ENCODE measurements at regions of chr3 and their contacts with region 1.

Region 1: GRCh38 chr3:172102123-172102882 is 62.9 kb downstream of the FNDC3B start:
- DNase-seq: no peak
- ATAC-seq: peak in 1 of 4 donors; percentile 30
- H3K4me3 ChIP-seq: peak overlapping the region in 1 of 12 donors; percentile 6
- H3K27ac ChIP-seq: peak overlapping the region in 1 of 12 donors; percentile 45
- H3K4me1 ChIP-seq: peaks cover 9 to 100% (median 87%) of the 10 kb centered on the region in 12 donors
- H3K27me3 ChIP-seq: no peaks in the 10 kb centered on the region
- CTCF ChIP-seq: no peak
- POLR2A ChIP-seq: no peak

Region 2: DNA sequence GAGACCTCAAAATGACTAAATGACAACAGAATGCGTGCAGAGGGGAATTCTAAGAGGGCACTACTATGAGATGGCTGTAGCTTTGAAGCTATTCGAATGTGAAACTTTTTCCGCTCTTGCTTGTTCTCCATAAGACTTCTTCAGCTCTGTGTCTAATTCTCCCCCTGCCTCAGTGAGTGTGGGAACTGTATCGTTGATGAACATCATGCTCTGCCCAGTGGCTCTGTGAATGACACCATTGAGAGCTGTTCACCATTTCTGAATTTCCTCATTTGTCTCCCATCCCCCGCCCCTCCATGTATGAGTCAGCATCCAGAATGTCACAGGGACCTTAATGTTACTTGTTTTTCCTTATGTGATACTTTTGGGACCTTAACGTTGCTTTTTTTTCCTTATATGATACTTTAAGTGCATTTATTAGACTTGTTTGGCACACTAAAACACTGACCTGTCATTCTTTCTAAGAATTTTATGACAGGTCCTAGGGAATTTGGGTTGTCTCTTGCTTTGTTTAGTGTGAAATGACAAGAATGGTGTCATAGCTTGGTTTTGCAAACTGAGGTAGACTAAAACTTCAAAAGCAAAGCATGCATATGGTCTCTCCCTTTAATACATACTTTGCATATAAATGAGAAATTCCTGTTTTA is 36.6 kb after region 1 on chr3:
- intact Hi-C with region 1: loop called in 1 of 10 experiments (anchors 5 kb)
- DNase-seq: peak in 4 of 5 donors; percentile 56 to 63 (median 56)
- ATAC-seq: peak; percentile 28 to 75 (median 58)
- H3K4me3 ChIP-seq: no peak overlapping the region
- H3K27ac ChIP-seq: peak overlapping the region in 11 of 12 donors; percentile 16 to 92 (median 68)
- H3K4me1 ChIP-seq: peaks cover 27 to 100% (median 77%) of the 10 kb centered on the region in 12 donors
- H3K27me3 ChIP-seq: no peaks in the 10 kb centered on the region
- CTCF ChIP-seq: no peak
- POLR2A ChIP-seq: no peak

Region 3: GRCh38 chr3:172208586-172209332 is 106.5 kb after region 1 on chr3:
- intact Hi-C with region 1: no loop called
- DNase-seq: peak in 2 of 5 donors; percentile 28 to 59
- ATAC-seq: peak in 3 of 4 donors; percentile 1 to 23 (median 10)
- H3K4me3 ChIP-seq: no peak overlapping the region
- H3K27ac ChIP-seq: peak overlapping the region in 8 of 12 donors; percentile 41 to 73 (median 58)
- H3K4me1 ChIP-seq: peaks cover 10 to 71% (median 53%) of the 10 kb centered on the region in 12 donors
- H3K27me3 ChIP-seq: no peaks in the 10 kb centered on the region
- CTCF ChIP-seq: no peak
- POLR2A ChIP-seq: no peak

Region 4: DNA sequence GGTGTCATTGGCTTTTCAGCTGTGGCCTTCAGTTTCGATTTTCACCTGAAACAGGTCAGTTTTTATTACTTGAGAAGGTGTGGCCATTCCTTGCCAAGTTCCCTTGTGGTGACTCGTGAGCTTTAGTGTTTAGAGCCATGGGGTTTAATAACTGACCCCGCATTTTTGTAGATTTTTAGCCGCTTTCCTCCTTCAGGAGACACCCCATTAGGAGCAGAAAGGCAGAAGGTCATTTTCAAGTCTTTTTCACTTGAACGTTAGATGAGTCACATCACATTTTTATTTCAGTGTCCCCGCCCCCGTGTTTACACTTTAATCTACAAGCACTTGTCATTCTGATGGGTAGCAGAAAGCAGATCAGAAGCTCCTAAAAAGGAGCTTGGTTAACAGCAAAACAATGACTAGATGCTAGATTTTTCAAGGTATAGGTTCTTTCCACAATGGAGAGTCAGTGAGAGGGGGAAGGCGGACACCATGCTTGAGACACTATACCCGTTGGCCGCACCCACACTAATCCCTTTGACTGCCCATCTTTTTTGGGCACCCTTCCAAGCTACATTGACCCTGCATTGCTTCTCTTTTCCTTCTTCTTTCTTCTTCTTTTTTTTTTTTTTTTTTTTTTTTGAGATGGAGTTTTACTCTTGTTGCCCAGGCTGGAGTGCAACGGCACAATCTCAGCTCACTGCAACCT is 213.2 kb after region 1 on chr3:
- intact Hi-C with region 1: no loop called
- DNase-seq: peak in 3 of 5 donors; percentile 36 to 51 (median 39)
- ATAC-seq: peak; percentile 25 to 44 (median 30)
- H3K4me3 ChIP-seq: no peak overlapping the region
- H3K27ac ChIP-seq: peak overlapping the region; percentile 31 to 91 (median 83)
- H3K4me1 ChIP-seq: peaks cover 20 to 90% (median 80%) of the 10 kb centered on the region in 12 donors
- H3K27me3 ChIP-seq: no peaks in the 10 kb centered on the region
- CTCF ChIP-seq: no peak
- POLR2A ChIP-seq: no peak

Measured in heart left ventricle (tissue), 16 donors.